ENCODE measurements at regions of chr1 and their contacts with region 1.

Region 1: GRCh38 chr1:183915625-183916510 is 110.9 kb downstream of the RGL1 start:
- DNase-seq: peak; percentile 63
- H3K4me3 ChIP-seq: peak overlapping the region in 1 of 2 experiments; percentile 27; a peak in 1 of 4 replicates
- H3K27ac ChIP-seq: peak overlapping the region; percentile 68 to 80
- H3K4me1 ChIP-seq: peaks cover 15 to 29% of the 10 kb centered on the region in 2 experiments
- H3K27me3 ChIP-seq: no peaks in the 10 kb centered on the region
- CTCF ChIP-seq: peak; percentile 86
- EP300 ChIP-seq: peak in 1 of 2 experiments; percentile 68; a peak in 1 of 4 replicates
- RAD21 ChIP-seq: peak; percentile 97

Region 2: DNA sequence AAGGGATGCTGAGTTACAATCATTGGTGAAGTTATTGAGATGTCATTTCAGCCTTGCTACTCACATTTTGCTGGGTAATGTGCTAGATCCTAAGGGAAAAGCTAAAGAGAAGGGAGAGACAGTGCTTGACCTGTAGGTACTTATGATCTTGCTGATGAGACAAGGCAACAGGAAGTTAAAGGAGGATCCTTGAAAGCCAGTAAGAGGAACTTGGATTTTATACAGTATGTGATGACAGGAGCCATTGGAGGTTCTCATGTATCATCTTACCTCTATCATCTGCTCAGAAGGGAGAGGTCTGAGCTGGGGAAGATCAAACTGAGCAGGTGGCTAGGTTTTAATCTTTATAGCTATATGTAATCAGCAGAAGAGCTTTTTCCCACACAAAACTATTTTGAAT is 269.1 kb before region 1 on chr1:
- CTCF ChIA-PET with region 1: interaction called, 219 read pairs
- POLR2A ChIA-PET with region 1: no interaction called
- DNase-seq: no peak
- H3K4me3 ChIP-seq: no peak overlapping the region
- H3K27ac ChIP-seq: no peak overlapping the region
- H3K4me1 ChIP-seq: no peaks in the 10 kb centered on the region; a peak in 2 of 4 replicates
- H3K27me3 ChIP-seq: no peaks in the 10 kb centered on the region
- CTCF ChIP-seq: no peak
- EP300 ChIP-seq: no peak
- RAD21 ChIP-seq: no peak

Region 3: GRCh38 chr1:183685112-183685713 is 230.7 kb before region 1 on chr1:
- CTCF ChIA-PET with region 1: interaction called, 34 read pairs
- POLR2A ChIA-PET with region 1: no interaction called
- DNase-seq: peak; percentile 56
- H3K4me3 ChIP-seq: no peak overlapping the region; a peak in 1 of 4 replicates
- H3K27ac ChIP-seq: no peak overlapping the region
- H3K4me1 ChIP-seq: no peaks in the 10 kb centered on the region
- H3K27me3 ChIP-seq: no peaks in the 10 kb centered on the region
- CTCF ChIP-seq: peak; percentile 70
- EP300 ChIP-seq: no peak
- RAD21 ChIP-seq: peak; percentile 77

Region 4: DNA sequence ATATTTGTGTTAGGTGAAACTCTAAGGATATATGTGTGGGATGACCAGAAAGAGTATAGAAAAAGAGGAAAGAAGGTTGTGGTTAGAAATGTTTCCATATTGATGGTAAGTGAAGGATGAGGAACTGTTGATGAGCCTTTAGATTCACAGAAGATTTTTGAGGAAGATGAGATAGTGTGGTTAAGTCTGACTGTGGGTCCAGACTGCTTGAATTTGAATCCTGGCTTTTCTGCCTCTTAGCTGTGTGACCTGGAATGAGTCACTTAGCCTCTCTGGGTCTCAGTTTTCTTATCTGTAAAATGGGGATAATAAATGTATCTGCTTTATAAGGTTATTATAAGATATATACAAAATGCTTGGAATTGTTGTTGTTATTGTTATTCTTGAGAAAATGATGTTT is 83.4 kb before region 1 on chr1:
- CTCF ChIA-PET with region 1: interaction called, 13 read pairs
- POLR2A ChIA-PET with region 1: no interaction called
- DNase-seq: no peak
- H3K4me3 ChIP-seq: no peak overlapping the region
- H3K27ac ChIP-seq: no peak overlapping the region
- H3K4me1 ChIP-seq: peaks cover 9 to 10% of the 10 kb centered on the region in 2 experiments; a peak in 3 of 4 replicates
- H3K27me3 ChIP-seq: no peaks in the 10 kb centered on the region
- CTCF ChIP-seq: no peak
- EP300 ChIP-seq: no peak
- RAD21 ChIP-seq: no peak

Region 5: GRCh38 chr1:183891158-183891856 is 24.6 kb before region 1 on chr1:
- CTCF ChIA-PET with region 1: interaction called, 12 read pairs
- POLR2A ChIA-PET with region 1: no interaction called
- DNase-seq: no peak
- H3K4me3 ChIP-seq: no peak overlapping the region
- H3K27ac ChIP-seq: no peak overlapping the region
- H3K4me1 ChIP-seq: peaks cover 2 to 7% of the 10 kb centered on the region in 2 experiments; a peak in 3 of 4 replicates
- H3K27me3 ChIP-seq: no peaks in the 10 kb centered on the region
- CTCF ChIP-seq: no peak
- EP300 ChIP-seq: no peak
- RAD21 ChIP-seq: no peak